WTC11 (cell line): ENCODE measurements at regions of chr22 and their contacts with region 1.

Region 1: GRCh38 chr22:25179250-25179631 is 20.4 kb upstream of the CRYBB3 start:
- DNase-seq: peak; percentile 56
- ATAC-seq: peak; percentile 84
- H3K4me3 Mint-ChIP-seq: no peak overlapping the region
- H3K27ac Mint-ChIP-seq: no peak overlapping the region
- H3K4me1 Mint-ChIP-seq: peaks cover 7% of the 10 kb centered on the region
- H3K27me3 Mint-ChIP-seq: no peaks in the 10 kb centered on the region
- CTCF ChIP-seq: no peak

Region 2: GRCh38 chr22:25167834-25168601 is 11.2 kb before region 1 on chr22:
- CTCF ChIA-PET with region 1: interaction called, 11 read pairs
- POLR2A ChIA-PET with region 1: no interaction called
- DNase-seq: no peak
- ATAC-seq: no peak
- H3K4me3 Mint-ChIP-seq: no peak overlapping the region
- H3K27ac Mint-ChIP-seq: no peak overlapping the region
- H3K4me1 Mint-ChIP-seq: 0 out of 2 replicates have a peak, but pooled peaks cover 3% of the 10 kb centered on the region
- H3K27me3 Mint-ChIP-seq: no peaks in the 10 kb centered on the region
- CTCF ChIP-seq: no peak